ENCODE measurements at regions of chr22 and their contacts with region 1.

Region 1: GRCh38 chr22:38705235-38706100 is at the start of gene GTPBP1:
- DNase-seq: peak; percentile 98
- H3K4me3 Mint-ChIP-seq: peak within 1 kb of the TSS; percentile 92
- H3K27ac Mint-ChIP-seq: peak within 1 kb of the TSS; percentile 97
- H3K4me1 Mint-ChIP-seq: peaks cover 47% of the 10 kb centered on the region
- H3K27me3 Mint-ChIP-seq: peaks cover 1% of the 10 kb centered on the region
- total RNA-seq, gene GTPBP1: 95.4 to 98.1 TPM

Region 2: GRCh38 chr22:38506118-38506962 is 199.1 kb before region 1 on chr22 and contains the start of gene DDX17:
- CTCF ChIA-PET with region 1: no interaction called
- POLR2A ChIA-PET with region 1: interaction called, 3 read pairs
- intact Hi-C with region 1: loop called (anchors 1 kb)
- DNase-seq: peak; percentile 97
- H3K4me3 Mint-ChIP-seq: peak within 1 kb of the TSS; percentile 100
- H3K27ac Mint-ChIP-seq: peak within 1 kb of the TSS; percentile 100
- H3K4me1 Mint-ChIP-seq: peaks cover 41% of the 10 kb centered on the region
- H3K27me3 Mint-ChIP-seq: no peaks in the 10 kb centered on the region
- total RNA-seq, gene DDX17: 353 to 358 TPM

Region 3: DNA sequence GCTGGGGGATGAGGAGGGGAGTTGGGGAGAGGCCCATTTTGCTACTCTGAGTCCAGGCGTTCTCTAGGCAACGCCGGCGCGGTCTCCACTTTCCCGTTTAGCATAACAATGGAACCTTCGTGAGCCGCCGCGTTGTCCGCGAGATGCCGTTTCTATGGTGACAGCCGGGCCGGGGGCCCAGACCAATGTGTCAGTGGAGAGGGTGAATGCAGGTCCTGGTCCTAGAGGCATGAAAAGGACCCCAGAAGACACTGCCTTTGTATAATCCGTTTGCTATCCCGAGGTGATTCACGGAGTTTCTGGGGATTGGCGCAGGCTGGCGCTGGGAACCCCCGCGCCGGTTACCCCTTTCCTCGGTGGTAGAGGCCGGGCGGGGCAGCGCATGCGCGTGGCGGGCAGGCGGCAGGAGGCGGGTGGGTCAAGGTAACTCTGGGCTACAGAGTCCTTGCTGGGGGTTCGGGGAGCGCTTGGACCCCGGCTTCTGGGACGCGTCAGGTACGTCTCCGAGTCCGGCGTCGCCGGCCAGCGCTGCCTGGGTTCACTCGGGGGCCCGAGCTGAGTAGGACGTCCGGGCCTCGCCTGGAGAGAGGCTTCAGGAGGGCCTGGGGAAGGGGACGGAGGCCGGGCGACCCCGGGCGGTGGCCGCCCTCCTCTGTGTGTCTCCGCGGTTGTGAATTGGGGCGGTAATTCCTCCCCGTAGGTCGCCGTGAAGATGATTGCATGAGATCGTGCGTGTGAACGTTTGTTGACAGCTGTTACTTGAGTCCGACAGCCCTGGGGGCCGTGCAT is 49.0 kb before region 1 on chr22 and contains the starts of genes CBY1 and FAM227A:
- CTCF ChIA-PET with region 1: no interaction called
- POLR2A ChIA-PET with region 1: interaction called, 3 read pairs
- intact Hi-C with region 1: loop called (anchors 2 kb)
- DNase-seq: peak; percentile 88
- H3K4me3 Mint-ChIP-seq: peak within 1 kb of the TSS; percentile 88
- H3K27ac Mint-ChIP-seq: peak within 1 kb of the TSS; percentile 96
- H3K4me1 Mint-ChIP-seq: peaks cover 15% of the 10 kb centered on the region
- H3K27me3 Mint-ChIP-seq: no peaks in the 10 kb centered on the region
- total RNA-seq, gene CBY1: 9.8 to 14.6 TPM
- total RNA-seq, gene FAM227A: 0.36 to 0.88 TPM

Region 4: GRCh38 chr22:38674888-38675287 is 30.6 kb before region 1 on chr22:
- CTCF ChIA-PET with region 1: no interaction called
- POLR2A ChIA-PET with region 1: no interaction called
- intact Hi-C with region 1: no loop called
- DNase-seq: no peak
- H3K4me3 Mint-ChIP-seq: no peak overlapping the region
- H3K27ac Mint-ChIP-seq: no peak overlapping the region
- H3K4me1 Mint-ChIP-seq: no peaks in the 10 kb centered on the region
- H3K27me3 Mint-ChIP-seq: no peaks in the 10 kb centered on the region

Region 5: GRCh38 chr22:38724926-38725571 is 19.6 kb after region 1 on chr22:
- CTCF ChIA-PET with region 1: interaction called, 15 read pairs
- POLR2A ChIA-PET with region 1: no interaction called
- intact Hi-C with region 1: no loop called
- DNase-seq: no peak
- H3K4me3 Mint-ChIP-seq: no peak overlapping the region
- H3K27ac Mint-ChIP-seq: peak overlapping the region; percentile 1
- H3K4me1 Mint-ChIP-seq: no peaks in the 10 kb centered on the region
- H3K27me3 Mint-ChIP-seq: no peaks in the 10 kb centered on the region

Region 6: GRCh38 chr22:38784856-38785255 is 79.4 kb after region 1 on chr22:
- CTCF ChIA-PET with region 1: no interaction called
- POLR2A ChIA-PET with region 1: no interaction called
- intact Hi-C with region 1: no loop called
- DNase-seq: no peak
- H3K4me3 Mint-ChIP-seq: no peak overlapping the region
- H3K27ac Mint-ChIP-seq: no peak overlapping the region
- H3K4me1 Mint-ChIP-seq: peaks cover 4% of the 10 kb centered on the region
- H3K27me3 Mint-ChIP-seq: no peaks in the 10 kb centered on the region

Region 7: GRCh38 chr22:38870312-38870746 is 164.9 kb after region 1 on chr22:
- CTCF ChIA-PET with region 1: no interaction called
- POLR2A ChIA-PET with region 1: no interaction called
- intact Hi-C with region 1: no loop called
- DNase-seq: peak; percentile 92
- H3K4me3 Mint-ChIP-seq: peak overlapping the region; percentile 93
- H3K27ac Mint-ChIP-seq: peak overlapping the region; percentile 91
- H3K4me1 Mint-ChIP-seq: peaks cover 59% of the 10 kb centered on the region
- H3K27me3 Mint-ChIP-seq: no peaks in the 10 kb centered on the region